ENCODE measurements at regions of chr9 and their contacts with region 1.

Region 1: GRCh38 chr9:129737479-129738274 is 15.2 kb downstream of the PTGES start:
- DNase-seq: peak; percentile 88
- ATAC-seq: peak; percentile 96

Region 2: DNA sequence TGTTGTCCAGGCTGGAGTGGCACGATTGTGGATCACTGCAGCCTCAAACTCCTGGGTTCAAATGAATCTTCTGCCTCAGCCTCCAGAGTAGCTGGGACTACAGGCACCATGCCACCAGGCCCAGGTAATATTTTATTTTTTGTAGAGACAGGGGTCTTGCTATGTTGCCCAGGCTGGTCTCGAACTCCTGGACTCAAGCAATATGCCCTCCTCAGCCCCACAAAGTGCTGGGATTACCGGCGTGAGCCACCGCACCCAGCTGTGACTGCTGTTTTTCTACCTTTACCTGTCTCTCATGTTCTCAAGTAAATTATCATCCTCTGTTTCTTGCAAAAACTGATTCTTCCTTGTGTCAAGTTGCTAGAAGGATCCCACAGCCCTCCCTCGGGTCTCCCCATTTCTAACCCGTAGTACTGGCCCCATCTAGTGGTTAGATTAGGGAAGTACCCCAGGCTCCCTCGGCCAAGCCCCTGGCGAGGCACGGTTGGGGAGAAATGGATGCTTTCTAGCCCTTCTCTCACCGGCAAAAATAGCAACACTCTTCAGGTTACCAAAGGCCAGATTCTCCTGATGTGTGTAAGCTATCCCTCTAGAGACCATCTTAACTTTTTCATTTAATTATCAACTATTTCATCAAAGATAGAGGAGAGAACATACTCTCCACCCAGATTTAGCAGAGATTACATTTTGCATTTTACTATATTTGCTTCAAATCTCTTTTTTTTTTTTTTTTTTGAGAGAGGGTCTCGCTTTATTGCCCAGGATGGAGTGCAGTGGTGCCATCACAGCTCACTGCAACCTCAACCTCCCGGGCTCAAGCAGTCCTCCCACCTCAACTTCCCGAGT is 46.1 kb after region 1 on chr9:
- intact Hi-C with region 1: loop called (anchors 10 kb)
- DNase-seq: peak; percentile 56
- ATAC-seq: peak; percentile 95

Measured in left ventricle myocardium superior (tissue), 1 donor.